ENCODE measurements at regions of chr7 and their contacts with region 1.

Region 1: DNA sequence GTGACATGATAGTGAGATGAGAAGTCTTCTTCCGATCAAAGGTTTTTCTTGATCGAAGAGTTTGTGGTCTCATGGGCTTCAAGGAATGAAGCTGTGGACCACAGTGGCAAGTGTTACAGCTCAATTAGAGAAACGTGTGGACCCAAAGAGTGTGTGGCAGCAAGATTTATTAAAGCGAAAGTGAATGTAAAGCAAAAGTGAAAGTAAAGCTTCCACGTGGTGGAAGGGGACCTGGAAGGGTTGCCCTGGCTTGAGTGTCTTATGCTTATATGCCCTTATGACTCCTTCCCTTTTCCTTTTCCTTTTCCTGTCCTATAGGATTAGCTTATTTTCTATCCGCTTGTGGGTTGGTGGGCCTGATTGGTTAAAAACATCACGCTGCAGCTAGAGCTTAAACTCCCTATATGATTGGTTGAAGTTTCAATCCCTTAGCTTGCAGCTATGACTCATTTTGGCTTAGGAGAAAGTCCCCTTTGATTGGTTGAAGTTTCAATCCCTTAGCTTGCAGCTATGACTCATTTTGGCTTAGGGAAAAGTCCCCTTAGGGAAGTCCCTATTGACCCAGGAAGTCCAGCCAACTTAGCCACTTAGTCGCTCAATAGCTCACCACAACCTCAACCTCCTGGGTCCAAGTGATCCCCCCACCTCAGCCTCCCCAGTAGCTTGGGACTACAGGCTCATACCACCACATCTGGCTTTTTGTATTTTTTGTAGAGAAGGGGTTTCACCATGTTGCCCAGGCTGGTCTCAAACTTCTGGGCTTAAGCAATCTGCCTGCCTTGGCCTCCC is 34.7 kb downstream of the MRPS24 start:
- DNase-seq: peak in 1 of 2 experiments; percentile 66
- ATAC-seq: no peak
- H3K4me3 ChIP-seq: 0 out of 3 replicates have a peak overlapping the region, but pooled peaks have one; percentile 20
- H3K27ac ChIP-seq: peak overlapping the region in 1 of 2 experiments; percentile 39; a peak in 1 of 6 replicates
- H3K4me1 ChIP-seq: peaks cover 3% of the 10 kb centered on the region; the same call in 1 of the 3 replicates
- CTCF ChIP-seq: no peak
- EP300 ChIP-seq: no peak
- POLR2A ChIP-seq: no peak
- RAD21 ChIP-seq: no peak

Region 2: DNA sequence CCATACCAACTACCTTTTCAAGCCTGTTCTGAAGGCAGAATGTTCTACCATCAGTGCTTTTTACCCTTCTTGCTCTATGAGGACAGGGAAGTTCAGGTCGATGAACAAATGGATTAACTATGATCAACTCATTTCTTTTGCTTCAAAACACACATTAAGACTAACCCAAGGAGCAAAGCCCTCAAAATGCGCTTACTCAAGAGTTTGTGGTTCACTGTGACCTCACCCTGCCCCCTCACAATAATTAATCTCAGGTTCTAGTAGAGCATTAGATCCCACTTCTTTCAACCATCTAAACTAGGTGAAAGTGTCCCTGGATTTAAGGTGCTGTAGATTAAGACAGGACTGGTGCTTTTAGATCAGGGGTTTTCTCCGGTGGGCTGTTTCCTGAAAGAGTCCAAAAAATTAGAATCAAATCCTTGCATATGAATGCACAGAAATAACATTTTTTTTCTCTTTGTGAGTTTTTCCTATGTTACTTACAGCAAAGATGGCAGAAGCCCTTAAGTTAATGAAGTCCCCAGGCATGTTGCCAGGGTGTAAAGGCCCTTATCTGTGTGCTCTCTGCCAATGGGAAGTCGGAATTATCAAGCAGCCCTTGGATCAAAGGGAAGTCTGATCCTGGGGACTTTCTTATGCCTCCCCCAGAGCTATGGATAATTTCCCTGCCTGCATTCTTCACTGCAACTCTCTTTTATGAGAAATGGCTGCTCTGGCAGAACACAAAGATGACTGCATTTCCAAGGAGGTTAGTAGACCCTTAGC is 457.3 kb before region 1 on chr7:
- CTCF ChIA-PET with region 1: no interaction called
- POLR2A ChIA-PET with region 1: no interaction called
- DNase-seq: no peak
- ATAC-seq: no peak
- H3K4me3 ChIP-seq: no peak overlapping the region
- H3K27ac ChIP-seq: no peak overlapping the region
- H3K4me1 ChIP-seq: no peaks in the 10 kb centered on the region
- CTCF ChIP-seq: no peak
- EP300 ChIP-seq: no peak
- POLR2A ChIP-seq: no peak
- RAD21 ChIP-seq: no peak

Region 3: GRCh38 chr7:43405948-43406347 is 428.7 kb before region 1 on chr7:
- CTCF ChIA-PET with region 1: no interaction called
- POLR2A ChIA-PET with region 1: no interaction called
- DNase-seq: no peak
- ATAC-seq: no peak
- H3K4me3 ChIP-seq: no peak overlapping the region
- H3K27ac ChIP-seq: no peak overlapping the region
- H3K4me1 ChIP-seq: no peaks in the 10 kb centered on the region
- CTCF ChIP-seq: no peak
- EP300 ChIP-seq: no peak
- POLR2A ChIP-seq: no peak
- RAD21 ChIP-seq: no peak

Region 4: GRCh38 chr7:43639858-43640491 is 194.7 kb before region 1 on chr7:
- CTCF ChIA-PET with region 1: interaction called, 13 read pairs
- POLR2A ChIA-PET with region 1: no interaction called
- DNase-seq: peak in 1 of 2 experiments; percentile 32
- ATAC-seq: peak; percentile 25 to 37; a peak in 3 of 6 replicates
- H3K4me3 ChIP-seq: no peak overlapping the region
- H3K27ac ChIP-seq: peak overlapping the region in 1 of 2 experiments; percentile 17; a peak in 2 of 6 replicates
- H3K4me1 ChIP-seq: peaks cover 28% of the 10 kb centered on the region; the same call in 2 of the 3 replicates
- CTCF ChIP-seq: no peak
- EP300 ChIP-seq: no peak
- POLR2A ChIP-seq: no peak
- RAD21 ChIP-seq: no peak

Region 5: DNA sequence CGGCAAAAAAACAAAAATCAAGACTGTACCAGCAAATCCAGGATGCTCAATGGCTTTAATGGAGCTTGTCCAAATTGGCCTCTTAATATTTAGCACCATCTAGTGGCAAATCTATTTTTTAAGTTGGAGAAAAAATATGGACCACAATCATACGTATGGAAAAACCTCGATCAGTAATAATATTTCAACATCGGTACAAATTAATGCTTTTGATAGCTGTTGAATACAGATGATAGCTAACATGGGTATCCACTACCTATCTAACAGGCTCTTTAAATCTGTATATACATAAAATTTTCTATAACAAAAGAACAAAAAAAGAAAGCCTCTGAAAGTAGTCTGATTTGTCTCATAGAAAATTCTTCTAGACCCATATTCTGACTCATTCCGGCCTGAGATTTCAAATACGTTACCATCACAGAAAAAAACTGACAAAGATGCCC is 134.6 kb before region 1 on chr7:
- CTCF ChIA-PET with region 1: interaction called, 42 read pairs
- POLR2A ChIA-PET with region 1: no interaction called
- DNase-seq: peak; percentile 28 to 56
- ATAC-seq: peak; percentile 78 to 80; a peak in 4 of 6 replicates
- H3K4me3 ChIP-seq: no peak overlapping the region
- H3K27ac ChIP-seq: no peak overlapping the region
- H3K4me1 ChIP-seq: peaks cover 42% of the 10 kb centered on the region
- CTCF ChIP-seq: peak; percentile 96
- EP300 ChIP-seq: no peak
- POLR2A ChIP-seq: no peak
- RAD21 ChIP-seq: peak; percentile 93 to 96

Region 6: DNA sequence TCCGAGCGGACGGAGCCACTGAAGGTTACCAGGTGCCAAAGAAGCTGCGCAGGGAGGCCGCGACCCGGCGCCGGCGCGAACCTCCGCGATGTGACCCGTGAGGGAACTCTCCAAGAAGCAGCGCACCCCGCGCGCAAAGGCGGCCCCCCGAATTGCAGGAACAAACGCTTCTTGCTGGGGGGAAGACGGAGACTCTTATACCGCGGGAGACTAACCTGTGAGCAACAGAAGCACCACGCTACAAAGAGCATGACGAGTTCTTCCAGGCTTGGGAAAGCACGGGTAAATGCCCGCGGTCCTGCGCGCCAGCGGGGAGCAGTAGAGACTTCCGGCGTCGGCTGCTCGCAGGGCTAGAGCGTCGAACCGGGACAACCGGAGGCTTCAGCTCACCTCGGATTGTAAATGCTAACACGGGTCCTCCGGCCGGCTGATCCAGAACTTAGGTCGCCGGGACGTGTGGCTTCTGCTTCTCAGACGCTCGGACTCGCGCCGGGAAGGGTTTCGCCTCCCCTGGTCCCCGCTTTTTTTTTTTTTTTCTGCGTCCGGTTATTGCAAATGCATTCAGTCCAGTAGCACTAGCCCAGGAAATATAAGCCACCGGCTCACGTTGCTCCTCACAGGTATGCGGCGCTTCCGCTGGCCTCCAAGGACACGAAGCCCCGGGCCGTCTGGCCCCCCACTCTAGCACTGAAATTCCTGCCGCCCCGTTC is 105.3 kb before region 1 on chr7 and contains the start of gene COA1:
- CTCF ChIA-PET with region 1: interaction called, 51 read pairs
- POLR2A ChIA-PET with region 1: interaction called, 5 read pairs
- DNase-seq: peak; percentile 77 to 95
- ATAC-seq: peak; percentile 98 to 99
- H3K4me3 ChIP-seq: peak within 1 kb of the TSS; percentile 57
- H3K27ac ChIP-seq: peak within 1 kb of the TSS; percentile 85 to 98
- H3K4me1 ChIP-seq: peaks cover 7% of the 10 kb centered on the region; the same call in 2 of the 3 replicates
- CTCF ChIP-seq: no peak
- EP300 ChIP-seq: no peak
- POLR2A ChIP-seq: peak; percentile 81
- RAD21 ChIP-seq: no peak; a peak in 2 of 5 replicates
- polyA plus RNA-seq, gene COA1: 57.5 and 84.0 TPM in 2 replicates

Region 7: DNA sequence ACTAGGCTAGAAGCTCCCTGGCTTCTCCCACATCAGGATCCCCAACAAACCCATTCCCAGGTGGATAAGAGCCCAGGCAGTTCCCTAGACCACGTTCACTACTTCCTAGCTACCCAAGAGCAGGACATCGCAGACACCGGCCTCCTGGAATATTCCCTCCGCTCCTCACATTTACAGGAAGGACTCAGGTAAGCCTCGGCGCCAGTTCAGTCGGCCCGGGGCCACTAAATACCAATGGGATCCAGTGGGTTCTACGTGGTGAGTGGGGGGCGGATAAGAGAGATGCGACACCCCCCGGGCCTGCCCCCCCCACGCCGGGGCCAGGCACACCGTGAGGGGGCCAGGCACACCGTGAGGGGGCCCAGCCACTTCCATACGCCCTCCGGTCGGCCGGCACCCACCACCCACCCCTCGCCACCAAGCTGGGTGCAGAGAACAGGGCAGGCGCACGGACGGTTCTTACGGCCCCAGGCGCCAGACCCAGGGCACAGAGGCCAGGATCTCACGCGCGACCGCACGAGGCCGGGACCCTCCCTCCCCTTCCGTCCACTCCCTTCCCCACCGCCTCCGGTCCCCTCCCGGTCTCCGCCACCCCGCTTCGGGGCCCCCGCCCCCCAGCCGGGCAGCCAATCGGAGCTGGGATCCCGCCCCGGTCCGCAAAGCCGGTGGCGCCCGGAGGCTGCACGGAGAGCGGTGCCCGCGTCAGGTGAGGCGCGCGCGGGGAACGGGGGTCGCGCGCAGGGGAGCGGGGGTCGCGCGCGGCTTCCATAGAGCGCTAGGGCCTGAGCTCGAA is 76.4 kb before region 1 on chr7 and contains the start of gene BLVRA:
- CTCF ChIA-PET with region 1: interaction called, 42 read pairs
- POLR2A ChIA-PET with region 1: no interaction called
- DNase-seq: peak; percentile 38 to 90
- ATAC-seq: peak; percentile 83 to 86
- H3K4me3 ChIP-seq: peak within 1 kb of the TSS; percentile 53
- H3K27ac ChIP-seq: peak within 1 kb of the TSS; percentile 74 to 95
- H3K4me1 ChIP-seq: peaks cover 43% of the 10 kb centered on the region
- CTCF ChIP-seq: no peak
- EP300 ChIP-seq: no peak
- POLR2A ChIP-seq: peak; percentile 71
- RAD21 ChIP-seq: no peak
- polyA plus RNA-seq, gene BLVRA: 71.3 and 85.4 TPM in 2 replicates

Region 8: DNA sequence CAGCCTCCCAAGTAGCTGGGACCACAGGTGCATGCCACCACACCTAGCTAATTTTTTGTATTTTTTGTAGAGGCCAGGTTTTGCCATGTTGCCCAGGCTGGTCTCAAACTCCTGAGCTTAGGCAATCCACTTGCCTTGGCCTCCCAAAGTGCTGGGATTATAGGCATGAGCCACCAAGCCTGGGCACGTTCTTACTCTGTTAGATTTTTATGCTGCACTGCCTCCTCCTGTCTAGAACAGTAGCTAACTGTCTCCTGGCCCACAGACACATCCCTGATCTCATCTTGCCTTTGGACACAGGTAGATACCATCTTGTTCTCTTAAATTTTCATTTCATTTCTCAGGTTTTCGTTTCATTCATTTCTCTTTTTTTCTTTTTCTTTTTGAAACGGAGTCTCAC is 35.1 kb before region 1 on chr7:
- CTCF ChIA-PET with region 1: interaction called, 20 read pairs
- POLR2A ChIA-PET with region 1: no interaction called
- DNase-seq: peak in 1 of 2 experiments; percentile 23
- ATAC-seq: peak in 1 of 2 experiments; percentile 59; a peak in 1 of 6 replicates
- H3K4me3 ChIP-seq: no peak overlapping the region
- H3K27ac ChIP-seq: no peak overlapping the region
- H3K4me1 ChIP-seq: no peaks in the 10 kb centered on the region
- CTCF ChIP-seq: 0 out of 3 replicates have a peak, but pooled peaks have one; percentile 13
- EP300 ChIP-seq: no peak
- POLR2A ChIP-seq: no peak
- RAD21 ChIP-seq: peak; percentile 24 to 41; a peak in 1 of 5 replicates

Region 9: GRCh38 chr7:43850348-43851116 is 15.9 kb after region 1 on chr7:
- CTCF ChIA-PET with region 1: interaction called, 51 read pairs
- POLR2A ChIA-PET with region 1: no interaction called
- DNase-seq: no peak
- ATAC-seq: no peak
- H3K4me3 ChIP-seq: no peak overlapping the region
- H3K27ac ChIP-seq: no peak overlapping the region
- H3K4me1 ChIP-seq: no peaks in the 10 kb centered on the region
- CTCF ChIP-seq: no peak
- EP300 ChIP-seq: no peak
- POLR2A ChIP-seq: no peak
- RAD21 ChIP-seq: no peak

Region 10: GRCh38 chr7:44200647-44201461 is 366.2 kb after region 1 on chr7 and contains the start of gene YKT6:
- CTCF ChIA-PET with region 1: no interaction called
- POLR2A ChIA-PET with region 1: no interaction called
- DNase-seq: peak; percentile 96 to 100
- ATAC-seq: peak; percentile 99 to 100
- H3K4me3 ChIP-seq: peak within 1 kb of the TSS; percentile 72
- H3K27ac ChIP-seq: peak within 1 kb of the TSS; percentile 91 to 92
- H3K4me1 ChIP-seq: peaks cover 9% of the 10 kb centered on the region; the same call in 2 of the 3 replicates
- CTCF ChIP-seq: peak; percentile 4; the same call in 2 of the 3 replicates
- EP300 ChIP-seq: no peak
- POLR2A ChIP-seq: peak; percentile 83
- RAD21 ChIP-seq: no peak; a peak in 1 of 5 replicates
- polyA plus RNA-seq, gene YKT6: 113 and 142 TPM in 2 replicates